ENCODE measurements at regions of chr10 and their contacts with region 1.

Region 1: DNA sequence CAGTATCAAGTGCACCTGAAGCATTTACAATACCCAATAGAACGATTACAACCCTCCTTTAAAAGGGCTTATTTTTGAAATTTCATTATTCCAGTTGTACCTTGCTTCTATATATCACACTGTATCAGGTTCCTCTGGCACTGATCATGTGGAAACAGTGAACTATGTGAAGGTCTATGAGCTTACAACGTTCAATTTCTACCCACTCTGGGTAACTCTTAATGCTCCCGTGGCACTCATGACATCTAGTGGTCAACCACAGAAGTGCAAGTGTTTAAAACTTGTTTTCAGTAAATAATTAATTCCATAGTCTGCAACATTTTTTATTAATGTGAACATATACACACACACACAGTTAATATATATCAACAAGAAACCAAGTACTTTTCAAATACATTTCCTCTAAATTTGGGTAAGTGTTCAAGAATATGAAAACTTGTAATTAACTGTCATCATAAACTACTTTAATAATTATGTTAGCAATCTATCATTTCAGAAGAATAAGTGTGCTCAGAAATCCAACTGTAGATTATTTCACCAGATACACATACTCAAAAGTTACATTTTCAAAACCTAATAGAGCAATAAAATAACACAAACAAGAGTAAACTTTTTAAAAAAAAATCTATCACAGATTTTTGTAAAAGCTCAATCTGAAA is 61.0 kb downstream of the MPP7 start:
- DNase-seq: no peak
- H3K4me3 ChIP-seq: no peak overlapping the region
- H3K27ac ChIP-seq: no peak overlapping the region
- H3K4me1 ChIP-seq: no peaks in the 10 kb centered on the region
- H3K27me3 ChIP-seq: no peaks in the 10 kb centered on the region
- CTCF ChIP-seq: peak; percentile 82 to 90 (median 83)

Region 2: GRCh38 chr10:27446091-27446918 is 795.6 kb before region 1 on chr10:
- intact Hi-C with region 1: loop called (anchors 10 kb)
- DNase-seq: no peak
- H3K4me3 ChIP-seq: no peak overlapping the region
- H3K27ac ChIP-seq: no peak overlapping the region
- H3K4me1 ChIP-seq: no peaks in the 10 kb centered on the region
- H3K27me3 ChIP-seq: no peaks in the 10 kb centered on the region
- CTCF ChIP-seq: peak; percentile 16 to 46 (median 37)

Region 3: DNA sequence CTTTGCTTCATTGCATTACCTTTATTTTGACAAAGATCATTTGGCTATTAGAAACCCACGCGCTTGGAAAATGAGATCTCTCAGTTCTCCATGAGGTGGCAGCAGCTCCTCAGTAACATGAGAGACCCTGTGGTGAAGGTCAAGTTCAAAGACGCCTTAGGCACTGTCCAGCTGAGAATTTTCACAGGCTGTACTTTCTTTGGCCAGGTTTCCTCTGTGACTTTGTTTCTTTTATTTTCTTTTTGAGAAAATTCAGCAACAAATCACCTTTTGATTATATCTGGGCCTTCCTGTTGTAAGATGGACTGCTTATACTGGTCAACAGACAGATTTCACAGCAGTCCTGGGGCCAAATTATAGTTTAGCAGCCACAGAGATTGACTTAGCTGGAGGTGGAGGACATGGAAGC is 683.3 kb before region 1 on chr10:
- intact Hi-C with region 1: loop called (anchors 2 kb)
- DNase-seq: peak in 1 of 2 donors; percentile 67
- H3K4me3 ChIP-seq: no peak overlapping the region
- H3K27ac ChIP-seq: no peak overlapping the region
- H3K4me1 ChIP-seq: no peaks in the 10 kb centered on the region
- H3K27me3 ChIP-seq: no peaks in the 10 kb centered on the region
- CTCF ChIP-seq: peak; percentile 75 to 86 (median 77)